Endothelial cell of umbilical vein (primary cell): ENCODE measurements at regions of chrX and their contacts with region 1.

Region 1: DNA sequence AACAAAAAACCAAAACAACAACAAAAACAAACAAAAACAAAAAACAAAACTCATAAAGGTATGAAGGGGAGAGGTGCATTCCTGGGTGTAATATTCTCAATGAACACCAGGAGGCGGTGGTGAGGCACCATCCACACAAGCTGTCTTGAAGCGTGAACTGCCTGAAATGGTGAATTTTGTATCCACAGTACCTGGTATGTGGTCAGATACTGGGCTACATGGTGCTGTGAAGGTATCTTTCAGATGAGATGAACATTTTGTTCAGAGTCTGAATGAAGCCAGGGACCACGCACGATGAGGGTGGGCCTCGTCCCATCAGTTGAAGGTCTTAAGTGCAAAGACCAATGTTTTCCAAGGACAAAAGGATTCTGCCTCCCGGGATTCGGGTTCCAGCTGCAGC is 58.5 kb downstream of the ASMT start:
- DNase-seq: peak; percentile 30
- H3K4me3 ChIP-seq: no peak overlapping the region
- H3K27ac ChIP-seq: no peak overlapping the region
- H3K4me1 ChIP-seq: no peaks in the 10 kb centered on the region
- H3K27me3 ChIP-seq: no peaks in the 10 kb centered on the region
- CTCF ChIP-seq: peak; percentile 60
- POLR2A ChIP-seq: no peak

Region 2: GRCh38 chrX:1824855-1825254 is 151.5 kb after region 1 on chrX:
- CTCF ChIA-PET with region 1: no interaction called
- POLR2A ChIA-PET with region 1: no interaction called
- dilution Hi-C with region 1: no loop called
- intact Hi-C with region 1: no loop called
- DNase-seq: no peak
- H3K4me3 ChIP-seq: no peak overlapping the region
- H3K27ac ChIP-seq: no peak overlapping the region
- H3K4me1 ChIP-seq: no peaks in the 10 kb centered on the region
- H3K27me3 ChIP-seq: no peaks in the 10 kb centered on the region
- CTCF ChIP-seq: no peak
- POLR2A ChIP-seq: no peak

Region 3: DNA sequence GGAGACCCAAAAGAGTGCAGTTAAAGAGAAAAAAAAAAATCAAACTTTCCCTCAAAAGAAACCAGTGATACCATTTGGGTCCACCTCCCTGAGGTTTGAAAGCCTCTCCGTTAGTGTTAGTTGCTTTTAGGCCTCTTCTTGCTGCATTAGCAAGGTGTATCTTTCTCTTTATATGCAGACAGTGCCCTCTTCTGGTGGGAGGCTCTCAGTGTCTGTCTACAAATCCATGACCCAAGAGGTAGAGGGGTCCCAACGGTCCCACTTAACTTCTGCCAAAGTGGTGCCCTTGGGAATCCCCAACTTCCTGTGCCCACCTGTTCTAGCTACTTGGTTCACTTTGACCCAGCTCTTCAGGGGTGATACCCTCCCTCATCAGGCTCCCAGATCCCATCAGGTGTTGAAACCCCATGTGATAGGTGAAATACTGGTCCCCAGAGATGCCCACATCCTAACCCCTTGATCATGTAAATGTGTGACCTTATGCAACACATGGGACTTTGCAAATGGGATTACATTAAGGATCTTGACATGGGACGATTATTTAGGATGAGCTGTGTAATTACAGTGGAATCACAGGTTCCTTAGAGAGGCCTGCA is 954.0 kb after region 1 on chrX:
- CTCF ChIA-PET with region 1: no interaction called
- POLR2A ChIA-PET with region 1: no interaction called
- dilution Hi-C with region 1: no loop called
- intact Hi-C with region 1: loop called (anchors 1 kb)
- DNase-seq: peak; percentile 57
- H3K4me3 ChIP-seq: no peak overlapping the region
- H3K27ac ChIP-seq: no peak overlapping the region
- H3K4me1 ChIP-seq: no peaks in the 10 kb centered on the region
- H3K27me3 ChIP-seq: no peaks in the 10 kb centered on the region
- CTCF ChIP-seq: peak; percentile 57 to 58
- POLR2A ChIP-seq: no peak

Region 4: DNA sequence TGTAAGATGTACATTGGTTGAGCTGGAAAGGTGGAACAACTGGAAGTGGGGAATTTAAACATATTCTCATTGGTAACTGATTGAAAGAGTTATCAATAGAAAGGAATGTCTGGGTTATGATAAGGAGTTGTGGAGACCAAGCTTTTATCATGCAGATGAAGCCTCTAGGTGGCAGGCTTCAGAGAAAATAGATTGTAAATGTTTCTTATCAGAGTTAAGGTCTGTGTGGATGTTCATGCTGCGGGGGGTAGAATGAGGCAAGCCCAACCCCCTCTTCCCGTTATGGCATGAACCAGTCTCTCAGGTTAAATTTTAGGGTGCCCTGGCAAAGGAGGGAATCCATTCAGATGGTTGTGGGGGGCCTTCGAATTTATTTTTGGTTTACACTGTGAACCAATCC is 1239.8 kb after region 1 on chrX:
- CTCF ChIA-PET with region 1: no interaction called
- POLR2A ChIA-PET with region 1: no interaction called
- dilution Hi-C with region 1: no loop called
- intact Hi-C with region 1: no loop called
- DNase-seq: no peak
- H3K4me3 ChIP-seq: no peak overlapping the region
- H3K27ac ChIP-seq: no peak overlapping the region
- H3K4me1 ChIP-seq: no peaks in the 10 kb centered on the region
- H3K27me3 ChIP-seq: no peaks in the 10 kb centered on the region
- CTCF ChIP-seq: no peak
- POLR2A ChIP-seq: no peak